ENCODE measurements at regions of chr14 and their contacts with region 1.

Region 1: GRCh38 chr14:56474419-56475022 is 105.1 kb upstream of the TMEM260 start:
- DNase-seq: peak; percentile 58
- ATAC-seq: peak; percentile 24
- H3K4me3 ChIP-seq: no peak overlapping the region
- H3K4me3 Mint-ChIP-seq: no peak overlapping the region
- H3K27ac ChIP-seq: no peak overlapping the region
- H3K27ac Mint-ChIP-seq: no peak overlapping the region
- H3K4me1 ChIP-seq: no peaks in the 10 kb centered on the region
- H3K4me1 Mint-ChIP-seq: no peaks in the 10 kb centered on the region
- H3K27me3 ChIP-seq: no peaks in the 10 kb centered on the region
- H3K27me3 Mint-ChIP-seq: peaks cover 4% of the 10 kb centered on the region
- CTCF ChIP-seq: peak; percentile 90

Region 2: GRCh38 chr14:55440385-55440784 is 1034.1 kb before region 1 on chr14 and contains the start of gene TBPL2:
- CTCF ChIA-PET with region 1: interaction called, 126 read pairs
- POLR2A ChIA-PET with region 1: no interaction called
- intact Hi-C with region 1: no loop called
- DNase-seq: no peak
- ATAC-seq: no peak
- H3K4me3 ChIP-seq: no peak within 1 kb of the TSS
- H3K4me3 Mint-ChIP-seq: no peak within 1 kb of the TSS
- H3K27ac ChIP-seq: no peak within 1 kb of the TSS
- H3K27ac Mint-ChIP-seq: no peak within 1 kb of the TSS
- H3K4me1 ChIP-seq: no peaks in the 10 kb centered on the region
- H3K4me1 Mint-ChIP-seq: no peaks in the 10 kb centered on the region
- H3K27me3 ChIP-seq: peaks cover 0 to 8% (median 0%) of the 10 kb centered on the region in 4 experiments
- H3K27me3 Mint-ChIP-seq: peaks cover 23% of the 10 kb centered on the region
- CTCF ChIP-seq: no peak
- total RNA-seq, gene TBPL2: not detected in 2 replicates

Region 3: GRCh38 chr14:55446218-55446654 is 1028.3 kb before region 1 on chr14:
- CTCF ChIA-PET with region 1: interaction called, 126 read pairs
- POLR2A ChIA-PET with region 1: no interaction called
- intact Hi-C with region 1: no loop called
- DNase-seq: peak; percentile 69
- ATAC-seq: no peak
- H3K4me3 ChIP-seq: no peak overlapping the region
- H3K4me3 Mint-ChIP-seq: no peak overlapping the region
- H3K27ac ChIP-seq: no peak overlapping the region
- H3K27ac Mint-ChIP-seq: no peak overlapping the region
- H3K4me1 ChIP-seq: no peaks in the 10 kb centered on the region
- H3K4me1 Mint-ChIP-seq: no peaks in the 10 kb centered on the region
- H3K27me3 ChIP-seq: no peaks in the 10 kb centered on the region
- H3K27me3 Mint-ChIP-seq: no peaks in the 10 kb centered on the region
- CTCF ChIP-seq: peak; percentile 82

Region 4: DNA sequence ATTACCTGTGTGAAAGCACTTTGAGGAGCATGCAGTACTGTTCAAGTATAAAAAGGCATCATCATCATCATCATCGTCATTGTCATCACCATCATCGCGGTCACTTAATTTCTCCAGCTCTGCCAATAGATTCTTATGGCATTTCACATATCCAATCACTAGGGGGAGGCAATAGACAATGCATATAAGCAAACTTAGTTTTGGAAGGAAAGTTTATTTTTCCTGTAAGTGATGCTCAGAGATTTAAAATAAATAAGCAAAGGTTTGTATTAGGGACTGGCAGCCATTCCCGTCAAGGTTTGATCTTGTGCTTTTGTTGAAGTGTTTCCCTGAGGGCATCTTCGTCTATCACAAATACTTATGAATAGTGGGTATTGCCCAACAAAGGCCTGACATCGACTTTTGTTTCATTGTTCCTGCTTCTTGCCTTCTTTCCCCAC is 767.1 kb before region 1 on chr14:
- CTCF ChIA-PET with region 1: interaction called, 13 read pairs
- POLR2A ChIA-PET with region 1: no interaction called
- intact Hi-C with region 1: loop called (anchors 1 kb)
- DNase-seq: peak; percentile 8
- ATAC-seq: no peak
- H3K4me3 ChIP-seq: no peak overlapping the region
- H3K4me3 Mint-ChIP-seq: no peak overlapping the region
- H3K27ac ChIP-seq: no peak overlapping the region
- H3K27ac Mint-ChIP-seq: no peak overlapping the region
- H3K4me1 ChIP-seq: no peaks in the 10 kb centered on the region
- H3K4me1 Mint-ChIP-seq: peaks cover 3% of the 10 kb centered on the region
- H3K27me3 ChIP-seq: no peaks in the 10 kb centered on the region
- H3K27me3 Mint-ChIP-seq: no peaks in the 10 kb centered on the region
- CTCF ChIP-seq: peak; percentile 24

Region 5: GRCh38 chr14:55731881-55732498 is 742.5 kb before region 1 on chr14:
- CTCF ChIA-PET with region 1: interaction called, 28 read pairs
- POLR2A ChIA-PET with region 1: no interaction called
- intact Hi-C with region 1: loop called (anchors 1 kb)
- DNase-seq: peak; percentile 33
- ATAC-seq: no peak
- H3K4me3 ChIP-seq: no peak overlapping the region
- H3K4me3 Mint-ChIP-seq: no peak overlapping the region
- H3K27ac ChIP-seq: no peak overlapping the region
- H3K27ac Mint-ChIP-seq: no peak overlapping the region
- H3K4me1 ChIP-seq: no peaks in the 10 kb centered on the region
- H3K4me1 Mint-ChIP-seq: no peaks in the 10 kb centered on the region
- H3K27me3 ChIP-seq: no peaks in the 10 kb centered on the region
- H3K27me3 Mint-ChIP-seq: no peaks in the 10 kb centered on the region
- CTCF ChIP-seq: peak; percentile 62

Region 6: DNA sequence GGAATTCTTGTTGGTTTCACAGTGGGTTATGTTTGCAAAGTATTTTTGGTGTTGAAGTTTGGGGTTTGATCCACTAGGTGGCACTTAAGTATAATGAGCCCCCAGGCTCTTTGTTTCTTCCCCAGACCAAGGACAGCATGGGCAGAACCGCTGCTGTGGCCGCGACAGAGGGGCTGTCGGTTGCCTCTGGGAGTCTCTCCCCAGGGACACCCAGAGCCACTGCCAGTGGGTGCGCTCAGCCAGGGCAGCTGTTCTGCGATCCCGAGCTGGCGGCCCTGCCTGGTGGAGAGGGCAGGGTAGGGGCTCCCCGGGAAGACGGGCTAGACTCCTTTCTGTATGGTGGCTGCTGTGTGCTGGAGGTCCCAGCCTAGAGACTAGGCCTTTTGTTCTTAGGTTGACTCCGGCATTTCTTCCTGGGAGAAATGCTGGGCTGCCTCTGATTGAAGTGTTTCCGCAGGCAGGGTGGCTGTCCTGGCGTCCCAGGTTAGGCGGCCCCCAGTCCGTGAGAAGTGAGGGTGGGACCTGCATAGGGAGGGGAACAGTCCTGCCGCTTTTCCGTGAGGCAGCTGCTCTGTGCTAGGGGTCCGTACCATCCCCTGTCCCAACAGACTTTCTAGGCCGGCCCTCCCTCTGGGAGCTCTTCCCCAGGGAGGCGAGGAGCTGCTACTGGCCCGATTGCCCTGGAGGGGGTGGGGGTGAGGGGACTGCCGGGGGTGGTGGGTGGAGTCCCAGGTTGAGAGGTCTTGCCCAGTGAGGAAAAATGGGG is 609.4 kb before region 1 on chr14:
- CTCF ChIA-PET with region 1: interaction called, 18 read pairs
- POLR2A ChIA-PET with region 1: no interaction called
- intact Hi-C with region 1: no loop called
- DNase-seq: no peak
- ATAC-seq: no peak
- H3K4me3 ChIP-seq: no peak overlapping the region
- H3K4me3 Mint-ChIP-seq: no peak overlapping the region
- H3K27ac ChIP-seq: no peak overlapping the region
- H3K27ac Mint-ChIP-seq: no peak overlapping the region
- H3K4me1 ChIP-seq: peaks cover 0 to 21% of the 10 kb centered on the region in 2 donors
- H3K4me1 Mint-ChIP-seq: peaks cover 19% of the 10 kb centered on the region
- H3K27me3 ChIP-seq: no peaks in the 10 kb centered on the region
- H3K27me3 Mint-ChIP-seq: peaks cover 13% of the 10 kb centered on the region
- CTCF ChIP-seq: peak; percentile 13